Calu3 (cell line): ENCODE measurements at regions of chr7 and their contacts with region 1.

Region 1: DNA sequence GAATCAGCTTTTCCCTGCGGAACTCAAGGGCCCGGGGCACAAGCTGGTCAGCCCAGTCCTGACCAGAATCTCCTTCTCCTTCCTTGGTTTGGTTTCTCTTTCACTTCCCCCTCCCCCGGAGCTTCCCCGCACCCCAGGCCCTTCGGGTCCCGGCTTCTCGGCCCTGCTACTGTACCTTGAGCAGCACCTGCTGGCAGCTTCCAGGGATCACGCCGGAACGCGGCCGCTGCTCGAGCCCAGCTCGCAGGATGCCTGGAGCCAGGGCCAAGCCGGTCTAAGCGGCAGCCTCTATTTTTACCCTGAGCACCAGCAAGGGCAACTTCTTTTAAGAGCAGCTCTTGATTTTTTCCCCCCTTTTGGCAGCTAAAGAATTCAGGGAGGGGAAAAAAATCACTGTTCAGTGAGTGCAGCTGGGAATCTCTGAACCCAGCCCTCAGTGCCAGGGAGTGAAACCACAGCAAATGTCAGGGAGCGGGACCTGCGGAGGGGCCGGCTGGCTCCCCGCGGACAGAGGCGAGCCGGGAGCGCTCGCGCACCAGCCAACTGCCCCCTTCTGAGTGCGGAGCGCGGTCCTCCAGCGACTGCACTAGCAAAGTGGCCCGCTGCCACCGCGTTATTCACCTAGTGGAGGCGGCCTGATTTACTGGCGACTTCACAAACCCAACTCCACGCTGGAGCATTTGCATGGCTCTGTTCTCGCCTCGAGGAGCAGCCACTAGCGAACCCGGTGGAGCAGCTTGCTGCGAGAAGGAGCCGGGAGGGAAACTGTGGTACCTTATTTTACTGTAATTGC is 2.4 kb upstream of the INHBA start:
- DNase-seq: peak; percentile 98
- H3K4me3 Mint-ChIP-seq: peak overlapping the region; percentile 75
- H3K27ac Mint-ChIP-seq: peak overlapping the region; percentile 52
- H3K4me1 Mint-ChIP-seq: peaks cover 69% of the 10 kb centered on the region
- H3K27me3 Mint-ChIP-seq: no peaks in the 10 kb centered on the region
- CTCF ChIP-seq: peak; percentile 97

Region 2: GRCh38 chr7:40232242-40232893 is 1472.9 kb before region 1 on chr7:
- CTCF ChIA-PET with region 1: interaction called, 13 read pairs
- intact Hi-C with region 1: loop called (anchors 1 kb)
- DNase-seq: peak; percentile 57
- H3K4me3 Mint-ChIP-seq: no peak overlapping the region
- H3K27ac Mint-ChIP-seq: no peak overlapping the region
- H3K4me1 Mint-ChIP-seq: peaks cover 9% of the 10 kb centered on the region
- H3K27me3 Mint-ChIP-seq: no peaks in the 10 kb centered on the region
- CTCF ChIP-seq: peak; percentile 62

Region 3: DNA sequence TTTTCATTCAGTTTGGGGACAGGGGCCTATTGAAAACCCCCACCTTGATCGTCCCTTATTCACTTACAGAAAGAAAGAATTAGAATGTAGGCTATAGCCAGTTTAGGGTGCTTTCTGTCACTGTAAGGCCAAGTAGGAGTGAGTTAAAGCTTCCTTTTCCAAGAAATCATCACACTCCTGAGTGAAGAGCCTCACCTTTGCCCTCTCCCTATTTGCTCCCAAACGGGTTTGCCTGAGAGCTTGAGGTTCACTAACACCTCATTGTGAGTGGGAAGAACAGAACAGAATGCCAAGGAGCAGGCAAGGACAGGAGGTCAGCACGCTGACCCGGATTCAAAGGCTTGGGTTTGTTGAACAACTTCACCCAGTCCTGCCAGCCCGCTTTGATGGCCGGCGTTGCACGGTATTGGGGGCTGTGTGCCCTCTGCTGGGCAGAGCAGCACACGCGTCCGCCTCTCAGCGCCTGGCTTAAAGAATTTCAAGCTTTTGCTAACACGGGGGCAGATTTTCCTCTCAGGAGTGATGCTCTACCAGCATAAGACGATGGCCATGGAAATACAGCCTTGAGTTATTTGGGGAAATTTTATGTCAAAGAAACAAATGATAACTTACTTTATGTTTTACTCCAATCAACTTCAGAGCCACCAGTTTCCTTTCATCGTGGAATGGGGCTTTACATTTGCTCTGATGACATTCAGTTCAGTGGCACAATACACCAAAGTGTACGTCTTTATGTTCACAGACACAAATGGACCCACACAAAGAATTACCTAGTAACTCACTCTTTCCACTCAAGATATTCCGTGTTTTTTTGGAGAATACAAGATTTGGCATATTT is 1100.5 kb before region 1 on chr7:
- CTCF ChIA-PET with region 1: interaction called, 5 read pairs
- intact Hi-C with region 1: loop called (anchors 5 kb)
- DNase-seq: peak; percentile 72
- H3K4me3 Mint-ChIP-seq: no peak overlapping the region
- H3K27ac Mint-ChIP-seq: no peak overlapping the region
- H3K4me1 Mint-ChIP-seq: peaks cover 10% of the 10 kb centered on the region
- H3K27me3 Mint-ChIP-seq: no peaks in the 10 kb centered on the region
- CTCF ChIP-seq: peak; percentile 92

Region 4: GRCh38 chr7:40763318-40764287 is 941.7 kb before region 1 on chr7:
- CTCF ChIA-PET with region 1: interaction called, 3 read pairs
- intact Hi-C with region 1: loop called (anchors 5 kb)
- DNase-seq: no peak
- H3K4me3 Mint-ChIP-seq: no peak overlapping the region
- H3K27ac Mint-ChIP-seq: no peak overlapping the region
- H3K4me1 Mint-ChIP-seq: peaks cover 8% of the 10 kb centered on the region
- H3K27me3 Mint-ChIP-seq: no peaks in the 10 kb centered on the region
- CTCF ChIP-seq: no peak

Region 5: GRCh38 chr7:41189866-41190265 is 515.4 kb before region 1 on chr7:
- CTCF ChIA-PET with region 1: interaction called, 3 read pairs
- intact Hi-C with region 1: loop called (anchors 5 kb)
- DNase-seq: peak; percentile 54
- H3K4me3 Mint-ChIP-seq: no peak overlapping the region
- H3K27ac Mint-ChIP-seq: peak overlapping the region; percentile 95
- H3K4me1 Mint-ChIP-seq: peaks cover 49% of the 10 kb centered on the region
- H3K27me3 Mint-ChIP-seq: no peaks in the 10 kb centered on the region
- CTCF ChIP-seq: no peak

Region 6: DNA sequence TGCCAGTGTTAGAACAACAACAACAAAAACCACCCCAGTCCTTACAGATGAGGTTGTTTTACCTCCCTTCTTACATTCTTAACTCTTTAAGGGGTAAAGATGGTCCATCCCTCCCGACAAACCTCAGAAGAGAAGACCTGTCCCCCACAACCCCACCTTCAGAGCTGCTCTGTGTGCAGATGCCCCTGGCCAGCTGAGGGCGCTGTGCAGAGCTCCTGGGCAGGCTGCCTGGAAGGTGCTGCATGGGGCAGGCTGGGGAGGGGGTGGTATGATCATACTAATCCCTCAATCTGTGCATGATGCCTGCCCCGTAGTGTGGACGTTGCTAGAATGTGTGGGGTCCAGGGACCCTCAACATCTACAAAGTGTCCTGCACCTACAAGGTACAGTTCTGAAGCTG is 389.5 kb before region 1 on chr7:
- CTCF ChIA-PET with region 1: interaction called, 12 read pairs
- intact Hi-C with region 1: no loop called
- DNase-seq: peak; percentile 34
- H3K4me3 Mint-ChIP-seq: no peak overlapping the region
- H3K27ac Mint-ChIP-seq: no peak overlapping the region
- H3K4me1 Mint-ChIP-seq: peaks cover 13% of the 10 kb centered on the region
- H3K27me3 Mint-ChIP-seq: no peaks in the 10 kb centered on the region
- CTCF ChIP-seq: peak; percentile 44

Region 7: GRCh38 chr7:41472427-41473125 is 232.7 kb before region 1 on chr7:
- CTCF ChIA-PET with region 1: no interaction called
- intact Hi-C with region 1: no loop called
- DNase-seq: no peak
- H3K4me3 Mint-ChIP-seq: no peak overlapping the region
- H3K27ac Mint-ChIP-seq: peak overlapping the region; percentile 2
- H3K4me1 Mint-ChIP-seq: peaks cover 20% of the 10 kb centered on the region
- H3K27me3 Mint-ChIP-seq: no peaks in the 10 kb centered on the region
- CTCF ChIP-seq: no peak

Region 8: DNA sequence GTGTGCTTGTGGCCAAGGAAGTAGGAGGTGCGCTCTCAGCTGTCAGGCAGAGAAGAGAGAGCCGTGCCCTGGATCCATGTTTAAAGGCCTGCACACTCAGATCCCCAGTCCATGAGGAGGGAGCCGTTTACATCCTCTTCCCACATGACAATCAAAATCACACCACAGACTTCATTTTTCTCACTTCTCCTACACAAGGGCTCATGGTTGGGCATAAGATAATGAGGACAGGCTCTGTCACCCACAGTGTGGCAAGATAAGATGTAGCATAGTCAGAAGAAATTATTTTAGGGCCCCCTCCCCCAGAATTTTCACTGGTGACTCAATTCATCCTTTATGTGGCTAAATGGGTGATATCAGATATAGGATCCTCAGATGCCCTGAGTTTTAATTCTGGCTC is 33.5 kb after region 1 on chr7:
- CTCF ChIA-PET with region 1: no interaction called
- intact Hi-C with region 1: no loop called
- DNase-seq: no peak
- H3K4me3 Mint-ChIP-seq: no peak overlapping the region
- H3K27ac Mint-ChIP-seq: no peak overlapping the region
- H3K4me1 Mint-ChIP-seq: no peaks in the 10 kb centered on the region
- H3K27me3 Mint-ChIP-seq: peaks cover 37% of the 10 kb centered on the region
- CTCF ChIP-seq: no peak

Region 9: DNA sequence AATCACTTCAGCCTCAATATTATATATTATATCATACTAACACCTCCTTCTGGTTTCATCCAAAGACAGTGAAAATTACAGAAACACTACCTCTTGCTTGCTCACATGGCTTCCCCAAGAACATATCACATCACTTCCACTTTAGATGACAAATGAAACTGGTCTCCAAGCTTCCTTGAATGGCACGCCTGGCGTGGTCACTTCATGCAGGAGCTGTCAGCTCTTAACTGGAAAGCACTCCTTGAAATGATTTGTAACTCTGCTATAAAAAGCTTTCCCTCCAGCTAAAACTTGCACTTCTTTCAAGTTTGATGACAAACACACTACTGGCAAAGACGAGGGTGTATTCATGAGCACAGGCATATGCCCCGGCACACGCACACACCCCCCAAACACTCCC is 81.6 kb after region 1 on chr7:
- CTCF ChIA-PET with region 1: no interaction called
- intact Hi-C with region 1: no loop called
- DNase-seq: no peak
- H3K4me3 Mint-ChIP-seq: no peak overlapping the region
- H3K27ac Mint-ChIP-seq: no peak overlapping the region
- H3K4me1 Mint-ChIP-seq: no peaks in the 10 kb centered on the region
- H3K27me3 Mint-ChIP-seq: peaks cover 39% of the 10 kb centered on the region
- CTCF ChIP-seq: no peak

Region 10: DNA sequence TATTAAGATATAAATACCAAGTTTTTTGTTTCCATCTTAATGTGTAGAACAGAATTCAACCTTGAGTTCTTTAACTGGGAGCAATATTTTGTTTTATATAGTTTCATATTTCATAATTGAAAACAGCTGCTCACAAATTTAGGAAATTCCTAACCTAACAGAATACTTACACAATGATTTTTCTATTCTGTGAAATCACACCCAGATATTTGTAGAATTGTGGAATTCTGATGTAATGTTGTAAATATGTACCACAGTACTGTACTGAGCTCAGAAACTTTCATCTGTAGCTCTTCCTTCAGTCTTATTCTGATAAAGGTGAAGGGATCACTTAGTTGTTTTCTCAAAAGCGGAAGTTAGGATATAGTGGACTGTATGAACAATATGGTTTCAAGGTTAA is 675.1 kb after region 1 on chr7:
- CTCF ChIA-PET with region 1: no interaction called
- intact Hi-C with region 1: no loop called
- DNase-seq: no peak
- H3K4me3 Mint-ChIP-seq: no peak overlapping the region
- H3K27ac Mint-ChIP-seq: no peak overlapping the region
- H3K4me1 Mint-ChIP-seq: no peaks in the 10 kb centered on the region
- H3K27me3 Mint-ChIP-seq: no peaks in the 10 kb centered on the region
- CTCF ChIP-seq: no peak